RWPE1 (cell line): ENCODE measurements at regions of chr20 and their contacts with region 1.

Region 1: DNA sequence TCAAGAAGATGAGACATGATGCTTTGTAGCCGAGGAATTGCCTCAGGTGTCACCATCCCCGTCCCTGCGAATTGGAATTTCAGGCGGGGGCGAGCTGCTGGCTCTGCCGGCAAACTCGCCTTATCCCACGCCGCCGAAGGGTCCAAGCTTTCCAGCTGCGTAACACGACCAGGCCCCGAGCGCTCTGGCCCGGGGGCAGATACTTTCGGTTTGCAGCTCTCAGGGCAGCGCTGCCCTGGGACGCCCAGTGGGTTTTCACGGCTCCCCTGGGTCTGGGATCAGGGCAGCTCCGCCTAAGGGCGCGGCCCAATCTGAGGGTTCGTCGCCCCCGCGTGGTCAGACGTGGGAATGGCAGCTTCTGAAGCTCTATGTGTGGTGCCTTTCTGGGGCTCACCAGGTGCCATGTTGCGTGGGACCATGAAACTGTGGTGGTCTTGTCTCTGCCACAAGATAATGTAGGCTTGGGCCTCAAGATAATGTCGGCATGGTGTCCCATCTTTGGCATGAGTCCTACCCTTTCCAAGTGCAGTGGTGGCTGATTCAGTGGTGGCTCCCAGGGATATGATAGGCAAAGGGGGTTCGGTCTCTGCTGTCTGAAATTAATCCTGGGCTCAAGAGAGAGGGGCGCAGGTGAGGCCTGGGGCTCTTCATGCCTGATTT is 20.9 kb downstream of the PIGT start:
- DNase-seq: peak; percentile 97
- H3K27ac ChIP-seq: peak overlapping the region; percentile 51
- CTCF ChIP-seq: peak; percentile 99

Region 2: GRCh38 chr20:45322952-45323383 is 113.9 kb before region 1 on chr20:
- CTCF ChIA-PET with region 1: interaction called, 82 read pairs
- POLR2A ChIA-PET with region 1: interaction called, 3 read pairs
- DNase-seq: no peak
- H3K27ac ChIP-seq: peak overlapping the region; percentile 38
- CTCF ChIP-seq: peak; percentile 71

Region 3: GRCh38 chr20:45362804-45363610 is 73.9 kb before region 1 on chr20 and contains the start of gene SYS1:
- CTCF ChIA-PET with region 1: interaction called, 65 read pairs
- POLR2A ChIA-PET with region 1: interaction called, 3 read pairs
- DNase-seq: peak; percentile 100
- H3K27ac ChIP-seq: peak within 1 kb of the TSS; percentile 90
- CTCF ChIP-seq: peak; percentile 100

Region 4: GRCh38 chr20:45392733-45393132 is 44.1 kb before region 1 on chr20:
- CTCF ChIA-PET with region 1: interaction called, 11 read pairs
- POLR2A ChIA-PET with region 1: no interaction called
- DNase-seq: no peak
- H3K27ac ChIP-seq: no peak overlapping the region
- CTCF ChIP-seq: no peak

Region 5: DNA sequence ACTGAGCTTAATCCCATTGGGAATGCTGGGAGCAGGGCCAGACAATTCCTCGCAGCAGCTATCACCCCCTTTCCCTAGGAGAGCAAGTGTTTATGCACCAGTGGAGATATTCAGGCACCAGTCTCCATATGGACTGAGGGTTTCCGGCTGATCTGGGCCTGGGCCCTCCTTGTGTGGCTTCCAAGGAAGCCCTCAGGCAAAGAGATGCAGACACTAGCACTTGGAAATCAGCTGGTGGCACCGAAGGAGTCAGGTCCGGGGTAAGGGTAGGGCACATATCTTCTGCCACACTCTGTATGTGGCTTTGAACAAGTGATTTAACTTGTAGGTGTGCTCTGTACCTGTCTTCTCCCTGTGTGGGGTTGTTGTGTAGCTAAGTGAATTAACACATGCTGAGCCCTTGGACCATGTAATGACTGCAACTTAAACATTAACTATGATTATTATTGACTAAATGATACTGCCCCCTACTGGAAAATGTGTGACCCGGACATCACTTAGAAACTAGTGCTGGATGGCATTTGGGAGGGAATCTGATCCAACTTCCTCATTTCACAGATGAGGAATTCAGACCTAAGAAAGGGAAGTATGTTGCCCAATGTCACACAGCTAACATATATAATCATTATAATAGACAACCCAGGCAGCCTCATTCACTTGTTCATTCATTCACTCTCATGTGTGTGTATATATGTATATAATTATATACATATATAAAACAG is 13.4 kb after region 1 on chr20:
- CTCF ChIA-PET with region 1: interaction called, 20 read pairs
- POLR2A ChIA-PET with region 1: no interaction called
- DNase-seq: no peak
- H3K27ac ChIP-seq: no peak overlapping the region
- CTCF ChIP-seq: peak; percentile 37

Region 6: GRCh38 chr20:45518282-45518681 is 81.4 kb after region 1 on chr20:
- CTCF ChIA-PET with region 1: no interaction called
- POLR2A ChIA-PET with region 1: no interaction called
- DNase-seq: peak; percentile 95
- H3K27ac ChIP-seq: no peak overlapping the region
- CTCF ChIP-seq: no peak